Breast epithelium (tissue), 4 donors: ENCODE measurements at regions of chr7 and their contacts with region 1.

Region 1: DNA sequence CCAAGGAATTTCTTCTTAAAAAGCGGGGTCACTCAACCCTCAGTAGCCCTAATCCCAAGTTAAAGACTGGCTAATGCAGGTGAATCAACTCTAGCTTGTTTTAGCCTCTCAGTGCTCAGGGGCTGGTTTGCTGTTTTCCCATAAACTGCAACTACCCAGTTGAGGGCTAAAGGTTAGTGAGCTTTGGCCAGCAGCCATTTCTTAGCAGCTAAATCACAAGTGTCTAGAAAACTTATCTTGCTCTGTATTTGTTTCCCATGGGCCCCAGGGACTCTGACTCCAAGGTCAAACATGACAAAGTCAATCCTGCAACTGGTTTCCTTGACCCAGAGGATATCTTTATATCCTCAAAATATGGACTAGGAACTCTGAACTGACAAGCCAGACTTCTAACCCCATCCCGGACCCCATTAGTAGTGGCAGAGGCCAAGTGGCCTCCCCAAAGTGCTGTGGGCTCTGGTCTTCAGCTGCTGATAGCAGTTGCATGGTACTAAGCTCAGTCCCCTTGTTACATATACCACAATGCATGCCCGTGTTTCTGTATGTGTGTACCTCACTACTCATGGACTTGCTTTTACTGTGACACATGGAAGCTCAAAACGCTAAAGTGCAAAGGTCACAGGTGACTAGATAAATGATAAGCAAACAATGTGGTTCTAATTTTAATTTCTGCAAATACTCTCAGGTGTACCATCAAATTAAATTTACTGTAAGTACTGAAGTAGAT is 793.0 kb upstream of the IGFBP3 start:
- DNase-seq: no peak
- H3K4me3 ChIP-seq: no peak overlapping the region
- H3K27ac ChIP-seq: no peak overlapping the region
- H3K4me1 ChIP-seq: no peaks in the 10 kb centered on the region
- H3K27me3 ChIP-seq: no peaks in the 10 kb centered on the region
- CTCF ChIP-seq: no peak
- POLR2A ChIP-seq: no peak

Region 2: DNA sequence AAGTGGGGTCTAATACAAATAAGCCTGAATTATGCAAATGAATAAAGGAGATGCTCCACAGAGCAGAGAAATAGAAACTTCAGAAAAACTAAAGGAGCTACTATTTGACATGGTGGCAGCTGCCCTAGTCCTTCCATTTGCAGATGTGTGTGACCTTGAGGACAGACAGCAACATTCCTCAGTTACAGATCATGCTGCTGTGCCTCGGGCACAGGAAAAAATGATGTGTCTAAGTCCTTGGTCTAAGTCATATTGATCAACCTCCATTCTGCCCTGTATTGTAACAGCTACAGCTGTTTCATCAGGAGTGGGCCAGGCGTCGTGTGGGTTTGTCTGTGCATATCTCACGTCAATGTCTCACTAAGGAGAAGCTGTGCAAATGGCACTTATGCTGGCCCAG is 157.5 kb after region 1 on chr7:
- intact Hi-C with region 1: no loop called
- DNase-seq: no peak
- H3K4me3 ChIP-seq: no peak overlapping the region
- H3K27ac ChIP-seq: no peak overlapping the region
- H3K4me1 ChIP-seq: no peaks in the 10 kb centered on the region
- H3K27me3 ChIP-seq: no peaks in the 10 kb centered on the region
- CTCF ChIP-seq: no peak
- POLR2A ChIP-seq: no peak

Region 3: GRCh38 chr7:46948716-46949115 is 234.7 kb after region 1 on chr7:
- intact Hi-C with region 1: loop called (anchors 2 kb)
- DNase-seq: no peak
- H3K4me3 ChIP-seq: no peak overlapping the region
- H3K27ac ChIP-seq: no peak overlapping the region
- H3K4me1 ChIP-seq: no peaks in the 10 kb centered on the region
- H3K27me3 ChIP-seq: no peaks in the 10 kb centered on the region
- CTCF ChIP-seq: no peak
- POLR2A ChIP-seq: no peak